Posterior vena cava (tissue), 2 donors: ENCODE measurements at regions of chr12 and their contacts with region 1.

Region 1: DNA sequence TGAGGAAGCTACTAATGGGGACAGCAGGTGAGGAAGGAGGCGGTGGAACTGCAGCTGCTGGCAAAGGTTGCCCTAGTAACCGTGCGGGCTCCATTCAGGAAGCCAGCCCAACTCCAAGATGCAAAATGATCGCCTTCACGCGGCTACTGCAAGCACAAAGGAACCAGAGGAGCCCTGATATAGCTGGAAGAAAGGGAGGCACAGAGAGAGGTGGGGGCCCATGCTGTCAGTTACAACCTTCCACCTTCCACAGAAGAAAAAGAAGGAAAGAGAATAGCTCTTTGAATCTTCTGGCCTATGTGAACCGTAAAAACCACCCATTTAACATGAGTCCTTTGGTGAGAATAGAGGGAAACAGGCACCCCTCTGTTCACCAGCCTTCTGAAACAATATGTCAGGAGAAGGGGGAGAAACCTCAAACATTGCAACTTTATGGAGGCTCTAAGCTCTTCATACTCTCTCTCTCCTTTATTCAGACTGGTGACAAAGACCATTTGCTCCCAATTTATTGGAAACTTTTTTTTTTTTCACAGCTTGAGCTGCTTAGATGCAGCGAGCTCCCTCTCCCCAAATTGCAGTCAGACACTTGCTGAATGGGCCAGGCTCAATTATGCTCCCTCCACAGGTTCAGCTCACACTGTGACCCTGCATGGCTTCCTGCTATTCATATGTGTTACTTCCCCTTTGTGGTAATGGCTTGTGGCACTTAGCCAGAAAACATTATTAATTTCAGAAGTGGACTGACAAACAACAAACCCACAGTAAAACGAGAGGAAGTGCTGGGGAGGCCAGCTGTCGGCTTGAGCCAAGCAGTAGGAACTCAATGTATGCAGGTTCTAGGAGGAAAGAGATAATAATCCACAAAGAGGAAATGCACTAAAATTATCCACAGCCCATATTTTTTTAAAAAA is 6.2 kb downstream of the DUSP6 start:
- DNase-seq: no peak

Region 2: DNA sequence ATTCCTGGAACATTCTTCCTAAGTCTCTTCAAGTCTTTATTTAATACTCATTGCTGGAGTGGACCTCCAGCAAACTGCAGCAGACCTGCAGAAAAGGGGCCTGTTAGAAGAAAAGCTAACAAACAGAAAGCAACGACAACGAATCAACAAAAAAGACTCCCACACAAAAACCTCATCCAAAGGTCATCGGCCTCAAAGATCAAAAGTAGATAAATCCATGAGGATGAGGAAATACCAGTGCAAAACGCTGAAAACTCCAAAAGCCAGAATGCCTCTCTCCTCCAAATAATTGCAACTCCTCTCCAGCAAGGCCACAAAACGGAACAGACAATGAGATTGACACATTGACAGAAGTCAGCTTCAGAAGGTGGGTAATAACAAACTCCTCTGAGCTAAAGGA is 1789.1 kb before region 1 on chr12:
- intact Hi-C with region 1: no loop called
- DNase-seq: no peak

Region 3: DNA sequence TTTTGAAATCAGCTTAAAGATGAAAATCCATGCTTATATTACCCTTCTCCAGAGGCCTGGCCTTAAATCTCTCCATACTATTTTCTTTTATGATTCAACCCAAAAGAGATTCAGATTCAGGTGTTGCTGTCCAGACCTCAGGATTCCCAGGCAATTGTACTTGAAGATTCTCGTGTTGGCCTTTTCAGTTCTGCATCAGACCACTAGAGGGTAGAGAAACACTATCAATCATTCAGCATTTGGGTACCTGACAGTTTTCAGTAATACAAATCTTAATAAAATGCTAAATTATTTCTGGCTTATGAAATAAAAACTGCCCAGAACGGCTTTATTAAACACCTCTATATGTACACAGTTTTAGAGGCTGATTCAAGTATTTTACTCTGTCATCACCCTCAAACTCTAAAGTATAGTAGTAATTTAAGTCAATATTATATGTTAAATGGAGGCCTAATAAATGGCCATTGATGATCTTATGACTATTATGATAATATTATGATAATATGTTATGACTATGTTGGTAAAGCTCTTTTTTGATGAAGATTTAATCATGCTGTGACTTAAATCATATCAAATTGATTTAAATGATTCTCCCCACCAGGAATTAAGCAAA is 294.9 kb before region 1 on chr12:
- intact Hi-C with region 1: loop called in 1 of 2 experiments (anchors 10 kb)
- DNase-seq: no peak

Region 4: DNA sequence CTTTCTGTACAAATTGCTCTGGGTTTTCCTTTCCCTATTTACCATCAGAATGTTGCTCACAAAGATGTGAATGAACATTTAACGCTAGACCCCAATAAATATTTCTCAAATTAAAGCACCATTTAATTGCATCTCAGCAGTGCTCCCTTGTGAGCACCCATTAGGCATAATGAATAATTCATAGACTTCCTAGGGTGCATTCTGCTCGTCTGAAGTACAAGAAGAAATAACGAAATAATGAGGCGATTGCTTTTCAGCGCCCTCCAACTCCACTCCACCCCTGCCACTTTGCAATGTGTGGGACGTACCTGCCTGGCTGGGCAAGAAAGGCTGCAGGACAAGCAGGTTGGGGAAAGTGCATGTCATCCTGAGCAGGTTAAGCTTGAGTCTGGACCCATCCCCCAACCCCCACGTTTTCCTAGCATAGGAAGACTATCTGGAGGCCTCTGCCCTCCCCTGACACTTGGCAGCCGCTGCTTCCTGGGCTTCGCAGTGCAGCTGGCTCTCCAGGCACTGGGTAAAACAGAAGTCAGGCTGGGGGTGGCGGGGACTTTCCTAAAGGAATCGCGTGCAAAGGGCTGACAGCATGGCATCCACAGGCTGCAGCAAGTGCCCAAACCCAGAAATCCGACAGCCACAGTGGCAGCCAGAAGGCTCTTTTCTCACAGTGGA is 247.5 kb before region 1 on chr12:
- intact Hi-C with region 1: no loop called
- DNase-seq: no peak

Region 5: DNA sequence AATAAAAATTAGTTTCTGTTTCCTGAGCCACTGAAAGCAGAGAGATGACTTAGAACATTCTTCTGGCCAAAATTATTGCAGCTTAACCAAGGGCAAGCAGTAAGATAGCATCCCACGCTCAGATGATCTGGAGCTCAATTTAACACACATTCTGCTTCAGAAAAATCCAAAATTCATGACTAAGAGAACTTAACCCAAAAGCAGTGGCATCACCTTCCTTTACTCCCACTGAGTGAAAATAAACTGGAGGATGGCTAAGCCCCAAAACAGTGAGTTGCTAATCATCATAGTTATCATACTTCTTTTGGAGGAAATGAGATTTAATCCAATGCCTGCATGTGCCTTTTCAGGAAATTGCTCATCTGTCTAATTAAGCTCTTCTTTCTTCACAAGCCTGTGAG is 189.2 kb before region 1 on chr12:
- intact Hi-C with region 1: loop called (anchors 5 kb)
- DNase-seq: no peak

Region 6: DNA sequence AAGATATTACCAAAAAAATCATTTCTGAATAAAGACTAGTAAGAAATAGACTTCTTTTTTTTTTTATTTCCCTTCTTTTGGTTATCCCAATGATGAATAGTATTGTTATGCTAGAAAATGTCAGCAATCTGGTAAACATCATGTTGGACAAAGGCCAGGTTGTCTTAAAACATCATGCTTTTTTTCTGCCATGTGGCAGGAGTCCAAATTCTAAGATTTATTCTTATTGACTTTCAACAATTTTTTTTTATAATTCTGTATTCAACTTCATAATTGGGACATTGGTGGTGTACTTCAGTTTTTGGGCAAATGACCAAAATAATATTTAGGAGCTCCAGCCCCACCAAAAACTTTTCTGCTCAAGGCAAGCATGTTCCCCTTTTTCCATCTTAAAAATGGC is 1826.0 kb after region 1 on chr12:
- intact Hi-C with region 1: no loop called
- DNase-seq: no peak